ENCODE measurements at regions of chr7 and their contacts with region 1.

Region 1: GRCh38 chr7:36670585-36671431 is 53.5 kb downstream of the AOAH start:
- DNase-seq: peak; percentile 76
- H3K4me3 ChIP-seq: no peak overlapping the region
- H3K27ac ChIP-seq: no peak overlapping the region
- H3K4me1 ChIP-seq: peaks cover 29% of the 10 kb centered on the region
- H3K27me3 ChIP-seq: no peaks in the 10 kb centered on the region
- CTCF ChIP-seq: peak; percentile 94 to 96

Region 2: GRCh38 chr7:36115448-36116321 is 555.1 kb before region 1 on chr7:
- CTCF ChIA-PET with region 1: no interaction called
- dilution Hi-C with region 1: no loop called
- in situ Hi-C with region 1: no loop called
- intact Hi-C with region 1: no loop called
- DNase-seq: peak; percentile 95
- H3K4me3 ChIP-seq: peak overlapping the region in 1 of 3 experiments; percentile 11
- H3K27ac ChIP-seq: peak overlapping the region; percentile 69
- H3K4me1 ChIP-seq: peaks cover 42% of the 10 kb centered on the region
- H3K27me3 ChIP-seq: no peaks in the 10 kb centered on the region
- CTCF ChIP-seq: no peak

Region 3: GRCh38 chr7:36487756-36488336 is 183.0 kb before region 1 on chr7:
- CTCF ChIA-PET with region 1: interaction called, 4 read pairs
- dilution Hi-C with region 1: loop called (anchors 10 kb)
- in situ Hi-C with region 1: loop called (anchors 5 kb)
- intact Hi-C with region 1: loop called (anchors 1 kb)
- DNase-seq: peak; percentile 60
- H3K4me3 ChIP-seq: no peak overlapping the region
- H3K27ac ChIP-seq: no peak overlapping the region
- H3K4me1 ChIP-seq: no peaks in the 10 kb centered on the region
- H3K27me3 ChIP-seq: no peaks in the 10 kb centered on the region
- CTCF ChIP-seq: peak; percentile 84 to 85

Region 4: GRCh38 chr7:36651404-36651803 is 19.4 kb before region 1 on chr7:
- CTCF ChIA-PET with region 1: interaction called, 5 read pairs
- dilution Hi-C with region 1: no loop called
- in situ Hi-C with region 1: no loop called
- intact Hi-C with region 1: loop called (anchors 1 kb)
- DNase-seq: peak; percentile 73
- H3K4me3 ChIP-seq: no peak overlapping the region
- H3K27ac ChIP-seq: peak overlapping the region; percentile 52
- H3K4me1 ChIP-seq: peaks cover 23% of the 10 kb centered on the region
- H3K27me3 ChIP-seq: no peaks in the 10 kb centered on the region
- CTCF ChIP-seq: no peak

Region 5: GRCh38 chr7:36784991-36785940 is 114.5 kb after region 1 on chr7:
- CTCF ChIA-PET with region 1: no interaction called
- dilution Hi-C with region 1: no loop called
- in situ Hi-C with region 1: no loop called
- intact Hi-C with region 1: loop called (anchors 5 kb)
- DNase-seq: peak; percentile 72
- H3K4me3 ChIP-seq: peak overlapping the region in 2 of 3 experiments; percentile 11 to 12
- H3K27ac ChIP-seq: peak overlapping the region; percentile 86
- H3K4me1 ChIP-seq: peaks cover 25% of the 10 kb centered on the region
- H3K27me3 ChIP-seq: no peaks in the 10 kb centered on the region
- CTCF ChIP-seq: no peak

Region 6: GRCh38 chr7:36871863-36872262 is 201.1 kb after region 1 on chr7:
- CTCF ChIA-PET with region 1: no interaction called
- dilution Hi-C with region 1: no loop called
- in situ Hi-C with region 1: no loop called
- intact Hi-C with region 1: no loop called
- DNase-seq: no peak
- H3K4me3 ChIP-seq: no peak overlapping the region
- H3K27ac ChIP-seq: no peak overlapping the region
- H3K4me1 ChIP-seq: no peaks in the 10 kb centered on the region
- H3K27me3 ChIP-seq: no peaks in the 10 kb centered on the region
- CTCF ChIP-seq: no peak

Measured in mammary epithelial cell (primary cell).